Left lung (tissue), 14 donors: ENCODE measurements at regions of chr20 and their contacts with region 1.

Region 1: GRCh38 chr20:49534255-49534712 is 33.7 kb downstream of the PTGIS start:
- DNase-seq: peak in 2 of 4 donors; percentile 42 to 60
- ATAC-seq: peak; percentile 90
- H3K4me3 ChIP-seq: no peak overlapping the region
- H3K27ac ChIP-seq: no peak overlapping the region
- H3K4me1 ChIP-seq: no peaks in the 10 kb centered on the region
- H3K27me3 ChIP-seq: no peaks in the 10 kb centered on the region
- CTCF ChIP-seq: peak; percentile 81 to 82

Region 2: DNA sequence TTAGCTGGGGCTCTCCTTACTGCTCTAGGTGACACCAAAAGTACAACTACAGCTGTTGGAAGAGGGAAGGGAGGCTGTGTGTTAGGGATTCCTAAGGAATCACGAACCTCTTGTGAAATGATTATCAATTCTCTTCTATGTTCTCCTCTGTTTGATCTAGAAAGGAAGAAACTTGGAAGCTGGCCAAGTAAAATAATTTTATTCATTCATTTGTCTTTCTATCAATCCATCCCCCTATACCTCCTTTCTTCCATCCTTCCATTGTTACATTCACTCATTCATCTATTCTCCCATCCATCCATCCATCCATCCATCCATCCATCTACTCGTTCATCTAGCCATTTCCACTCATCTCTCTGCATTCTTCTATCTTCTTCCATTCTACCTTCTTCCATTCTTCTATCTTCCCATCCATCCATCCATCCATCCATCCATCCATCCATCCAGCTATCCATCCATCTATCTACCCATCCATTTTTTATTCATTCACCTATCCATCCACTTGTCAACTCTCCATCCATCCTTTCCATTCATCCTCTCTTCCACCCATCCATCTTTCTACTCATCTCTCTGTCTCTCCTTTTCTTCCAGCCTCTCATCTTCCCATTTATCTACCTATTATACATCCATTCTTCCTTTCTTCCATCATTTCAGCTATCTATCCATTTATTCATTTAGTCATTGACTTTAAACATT is 203.6 kb before region 1 on chr20:
- intact Hi-C with region 1: loop called in 1 of 2 experiments (anchors 5 kb)
- DNase-seq: no peak
- ATAC-seq: no peak
- H3K4me3 ChIP-seq: no peak overlapping the region
- H3K27ac ChIP-seq: no peak overlapping the region
- H3K4me1 ChIP-seq: no peaks in the 10 kb centered on the region
- H3K27me3 ChIP-seq: peaks cover 0 to 29% of the 10 kb centered on the region in 2 donors
- CTCF ChIP-seq: no peak